GM13977 (cell line): ENCODE measurements at regions of chr2 and their contacts with region 1.

Region 1: DNA sequence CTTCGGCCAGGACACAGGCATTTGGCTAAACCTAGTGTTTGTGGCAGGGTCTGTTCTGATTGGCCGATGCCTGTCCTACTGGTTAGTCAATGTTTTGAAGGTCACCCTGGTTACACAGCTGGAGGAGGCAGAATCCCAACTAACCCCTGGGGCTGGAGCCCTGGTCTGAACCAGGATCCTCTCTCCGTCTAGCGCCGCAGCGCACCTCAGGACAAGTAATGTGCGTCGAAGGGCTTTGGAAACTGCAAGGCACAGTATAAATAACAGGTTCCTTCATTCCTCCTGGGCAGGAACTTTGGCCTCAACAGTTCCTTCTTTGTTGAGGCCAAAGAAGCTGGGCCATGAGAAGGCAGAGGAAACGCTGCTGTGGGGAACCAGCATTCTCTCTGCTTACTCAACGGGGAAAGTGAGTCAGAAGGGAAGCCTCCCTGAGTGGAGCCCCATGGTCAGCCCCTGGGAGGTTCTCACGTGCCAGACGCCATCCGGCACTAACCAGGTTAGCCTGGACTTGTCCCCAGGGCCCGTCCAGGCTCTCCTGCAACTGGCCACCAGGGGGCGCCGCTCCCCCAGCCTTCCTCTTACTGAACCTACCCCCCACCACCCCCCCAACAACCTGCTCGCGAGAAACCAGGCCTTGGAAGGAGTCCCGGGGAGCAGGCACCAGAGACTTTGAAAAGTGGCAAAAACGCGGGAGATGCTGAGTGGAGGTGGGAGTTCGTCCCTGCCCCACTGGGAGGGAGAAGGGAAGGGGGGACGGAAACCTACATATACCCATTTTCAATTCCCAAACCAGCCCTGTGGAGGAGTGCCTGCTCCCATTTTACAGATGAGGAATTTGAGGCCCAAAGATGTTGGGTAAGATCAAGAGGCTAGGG is 19.8 kb downstream of the TEX44 start:
- DNase-seq: peak; percentile 93
- CTCF ChIP-seq: peak; percentile 85

Region 2: DNA sequence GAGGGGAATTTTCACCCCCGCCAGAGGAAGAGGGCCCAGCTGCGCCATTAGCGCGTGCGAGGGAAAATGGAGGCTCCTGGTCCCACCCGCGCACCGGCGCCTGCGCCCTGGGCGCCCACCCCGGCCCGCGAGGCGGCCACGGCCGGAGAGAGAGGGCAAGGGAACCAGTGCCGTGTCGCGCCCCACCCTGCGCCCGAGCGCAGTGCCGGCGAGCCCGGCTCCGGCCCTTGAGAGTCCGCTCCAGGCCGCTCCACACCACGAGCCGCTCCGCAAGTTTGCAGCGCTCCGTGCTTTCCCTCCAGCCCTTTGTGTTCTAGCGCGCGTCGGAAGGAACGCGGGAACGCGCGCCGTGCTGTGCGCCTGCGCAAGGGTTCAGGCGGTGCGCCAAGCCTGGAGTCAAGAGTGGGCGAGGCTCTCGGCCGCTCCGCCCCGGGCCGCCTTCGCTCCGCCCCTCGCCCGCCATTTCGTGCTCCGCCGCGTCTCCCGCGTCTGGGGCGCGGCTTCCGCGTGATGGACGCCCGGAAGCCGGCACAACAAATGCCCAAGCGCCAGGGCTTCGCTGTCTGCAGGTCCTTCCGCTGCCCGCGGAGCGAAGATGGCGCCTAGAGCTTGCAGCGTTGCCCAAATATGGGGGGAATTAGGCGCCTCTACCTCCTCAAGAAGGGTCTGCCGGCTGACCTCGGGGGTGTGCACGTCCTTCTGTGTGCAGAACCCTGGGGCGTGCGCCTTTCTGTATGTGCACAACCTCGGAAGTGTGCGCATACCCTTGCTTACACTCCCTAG is 49.8 kb after region 1 on chr2:
- in situ Hi-C with region 1: loop called (anchors 5 kb)
- DNase-seq: peak; percentile 98
- CTCF ChIP-seq: no peak

Region 3: DNA sequence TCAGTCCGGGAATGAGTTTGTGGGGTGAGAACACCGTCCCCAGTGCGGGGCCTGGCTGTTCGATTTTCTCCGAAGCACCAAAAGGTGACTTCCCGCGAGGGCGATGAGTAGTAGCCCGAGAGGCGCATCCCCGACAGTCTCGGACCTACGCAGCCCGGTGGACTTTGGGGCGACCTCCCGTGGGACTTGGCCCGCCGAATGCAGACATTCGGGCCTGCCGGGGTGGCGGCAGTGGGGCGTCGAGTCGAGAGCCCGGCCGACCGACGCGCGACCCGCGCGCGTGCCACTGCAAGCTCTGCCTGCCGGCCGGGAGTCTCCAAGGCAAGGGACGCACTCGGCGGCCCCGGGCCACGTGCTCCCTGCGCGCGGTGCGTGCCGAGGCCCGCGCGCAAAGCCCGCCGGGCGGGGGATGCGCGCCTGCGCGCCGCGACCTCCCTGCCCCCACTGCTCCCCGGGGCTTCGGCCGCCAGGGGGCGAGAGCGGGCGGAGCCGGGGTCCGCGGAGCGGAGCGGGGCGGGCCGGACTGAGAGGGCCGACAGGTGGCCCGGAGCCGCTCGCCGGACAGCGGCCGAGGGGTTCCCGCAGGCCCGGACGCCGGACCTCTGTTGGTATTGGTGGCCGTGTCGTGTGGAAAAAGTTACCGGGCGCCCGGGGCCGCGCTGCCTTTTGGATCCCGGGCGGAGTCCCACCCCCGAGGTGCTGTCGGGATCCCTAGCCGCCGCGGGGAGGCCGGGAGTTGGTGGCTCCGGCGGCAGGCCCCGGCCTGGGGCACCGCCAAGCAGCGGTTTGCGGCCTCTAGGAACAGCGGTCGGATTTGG is 97.8 kb after region 1 on chr2:
- in situ Hi-C with region 1: loop called (anchors 10 kb)
- DNase-seq: peak; percentile 93
- CTCF ChIP-seq: peak; percentile 98

Region 4: DNA sequence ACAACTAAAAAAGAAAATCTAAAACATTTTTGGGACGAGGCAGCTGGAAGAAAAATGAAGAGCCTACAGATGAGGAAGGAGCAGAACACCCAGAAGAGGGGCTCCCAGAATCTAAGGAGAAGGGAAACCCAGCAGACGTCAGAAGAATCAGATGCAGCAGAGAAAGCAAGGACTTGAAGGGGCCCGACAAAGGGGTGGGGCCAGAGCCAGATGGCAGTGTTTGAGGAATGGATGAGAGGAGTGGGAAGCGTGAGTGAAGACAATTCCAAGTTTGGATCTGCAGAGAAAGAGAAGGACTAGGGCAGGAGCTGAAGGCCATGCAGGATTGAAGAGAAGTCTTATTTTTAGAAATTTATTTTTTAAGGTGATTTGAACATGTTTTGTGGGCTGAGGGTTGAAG is 115.2 kb after region 1 on chr2:
- in situ Hi-C with region 1: no loop called
- DNase-seq: no peak
- CTCF ChIP-seq: no peak